SK-N-SH (cell line): ENCODE measurements at regions of chr20 and their contacts with region 1.

Region 1: DNA sequence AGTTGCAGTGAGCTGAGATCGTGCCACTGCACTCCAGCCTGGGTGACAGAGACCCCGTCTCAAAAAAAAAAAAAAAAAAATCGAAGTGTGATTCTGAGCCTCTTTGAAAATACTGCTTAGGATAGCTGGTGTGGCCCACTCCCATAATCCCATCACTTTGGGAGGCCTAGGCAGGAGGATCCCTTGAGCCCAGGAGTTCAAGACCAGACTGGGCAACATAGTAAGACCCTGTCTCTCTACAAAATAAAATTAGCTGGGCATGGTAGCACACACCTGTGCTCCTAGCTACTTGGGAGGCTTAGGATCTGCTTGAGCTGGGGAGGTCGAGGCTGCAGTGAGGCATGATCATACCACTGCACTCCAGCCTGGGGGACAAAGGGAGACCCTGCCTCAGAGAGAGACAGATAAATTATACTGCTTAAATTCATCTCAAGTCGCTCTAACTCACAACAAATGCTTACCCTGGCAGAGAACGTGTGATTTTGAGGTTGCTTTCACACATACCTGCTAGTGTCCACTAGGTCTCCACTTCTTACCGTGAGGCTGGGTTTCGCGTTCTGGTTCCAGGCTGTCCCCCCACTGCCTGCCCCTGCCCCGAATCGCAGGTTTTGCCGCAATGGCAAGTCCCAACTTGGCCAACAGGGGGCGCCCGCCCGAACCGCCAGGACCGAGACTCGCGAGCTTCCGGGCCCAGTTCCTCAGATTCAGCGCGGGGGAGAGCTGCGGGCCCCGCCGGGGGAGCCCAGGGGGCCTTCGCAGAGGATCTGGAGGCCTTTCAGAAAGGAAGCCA is 12.3 kb upstream of the TMC2 start:
- DNase-seq: peak; percentile 87
- H3K4me3 ChIP-seq: peak overlapping the region; percentile 55 to 91
- H3K27ac ChIP-seq: peak overlapping the region; percentile 62 to 73; a peak in 3 of 4 replicates
- H3K4me1 ChIP-seq: peaks cover 5% of the 10 kb centered on the region in 2 experiments; a peak in 1 of 4 replicates
- H3K27me3 ChIP-seq: no peaks in the 10 kb centered on the region
- CTCF ChIP-seq: peak; percentile 97
- EP300 ChIP-seq: no peak
- RAD21 ChIP-seq: peak; percentile 61

Region 2: GRCh38 chr20:2508631-2509467 is 15.3 kb before region 1 on chr20 and contains the start of gene ZNF343:
- CTCF ChIA-PET with region 1: interaction called, 55 read pairs
- POLR2A ChIA-PET with region 1: no interaction called
- DNase-seq: peak; percentile 86
- H3K4me3 ChIP-seq: peak within 1 kb of the TSS; percentile 76 to 84
- H3K27ac ChIP-seq: peak within 1 kb of the TSS; percentile 56 to 95
- H3K4me1 ChIP-seq: peaks cover 2 to 12% of the 10 kb centered on the region in 2 experiments; a peak in 2 of 4 replicates
- H3K27me3 ChIP-seq: no peaks in the 10 kb centered on the region
- CTCF ChIP-seq: no peak
- EP300 ChIP-seq: no peak; a peak in 1 of 4 replicates
- RAD21 ChIP-seq: no peak
- polyA plus RNA-seq, gene ZNF343: 11.0 and 16.8 TPM in 2 replicates

Region 3: DNA sequence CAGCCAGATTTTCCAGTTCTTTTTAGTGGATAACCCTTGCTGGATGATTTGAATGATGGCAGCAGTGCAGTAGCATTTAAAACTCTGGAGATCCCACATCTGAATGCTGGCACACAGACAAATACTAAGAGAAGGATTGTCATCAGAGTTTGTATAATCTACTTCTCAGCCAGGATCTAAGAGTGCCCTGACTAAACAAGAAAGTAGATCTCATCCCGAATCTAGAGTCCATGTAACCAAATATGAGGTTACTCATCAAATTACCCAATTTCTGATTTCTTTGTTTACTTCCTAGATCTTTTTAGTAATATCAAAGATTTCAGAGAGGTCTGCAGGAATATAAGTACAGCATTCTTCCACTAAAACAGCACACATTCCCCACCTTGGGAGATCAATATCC is 20.1 kb after region 1 on chr20:
- CTCF ChIA-PET with region 1: interaction called, 16 read pairs
- POLR2A ChIA-PET with region 1: interaction called, 3 read pairs
- DNase-seq: no peak
- H3K4me3 ChIP-seq: no peak overlapping the region
- H3K27ac ChIP-seq: no peak overlapping the region
- H3K4me1 ChIP-seq: no peaks in the 10 kb centered on the region
- H3K27me3 ChIP-seq: no peaks in the 10 kb centered on the region; the same call in 1 of the 2 replicates
- CTCF ChIP-seq: no peak
- EP300 ChIP-seq: no peak
- RAD21 ChIP-seq: no peak

Region 4: GRCh38 chr20:2637246-2637645 is 113.1 kb after region 1 on chr20:
- CTCF ChIA-PET with region 1: interaction called, 14 read pairs
- POLR2A ChIA-PET with region 1: no interaction called
- DNase-seq: no peak
- H3K4me3 ChIP-seq: no peak overlapping the region
- H3K27ac ChIP-seq: no peak overlapping the region
- H3K4me1 ChIP-seq: no peaks in the 10 kb centered on the region
- H3K27me3 ChIP-seq: no peaks in the 10 kb centered on the region; the same call in 1 of the 2 replicates
- CTCF ChIP-seq: no peak
- EP300 ChIP-seq: no peak
- RAD21 ChIP-seq: no peak

Region 5: DNA sequence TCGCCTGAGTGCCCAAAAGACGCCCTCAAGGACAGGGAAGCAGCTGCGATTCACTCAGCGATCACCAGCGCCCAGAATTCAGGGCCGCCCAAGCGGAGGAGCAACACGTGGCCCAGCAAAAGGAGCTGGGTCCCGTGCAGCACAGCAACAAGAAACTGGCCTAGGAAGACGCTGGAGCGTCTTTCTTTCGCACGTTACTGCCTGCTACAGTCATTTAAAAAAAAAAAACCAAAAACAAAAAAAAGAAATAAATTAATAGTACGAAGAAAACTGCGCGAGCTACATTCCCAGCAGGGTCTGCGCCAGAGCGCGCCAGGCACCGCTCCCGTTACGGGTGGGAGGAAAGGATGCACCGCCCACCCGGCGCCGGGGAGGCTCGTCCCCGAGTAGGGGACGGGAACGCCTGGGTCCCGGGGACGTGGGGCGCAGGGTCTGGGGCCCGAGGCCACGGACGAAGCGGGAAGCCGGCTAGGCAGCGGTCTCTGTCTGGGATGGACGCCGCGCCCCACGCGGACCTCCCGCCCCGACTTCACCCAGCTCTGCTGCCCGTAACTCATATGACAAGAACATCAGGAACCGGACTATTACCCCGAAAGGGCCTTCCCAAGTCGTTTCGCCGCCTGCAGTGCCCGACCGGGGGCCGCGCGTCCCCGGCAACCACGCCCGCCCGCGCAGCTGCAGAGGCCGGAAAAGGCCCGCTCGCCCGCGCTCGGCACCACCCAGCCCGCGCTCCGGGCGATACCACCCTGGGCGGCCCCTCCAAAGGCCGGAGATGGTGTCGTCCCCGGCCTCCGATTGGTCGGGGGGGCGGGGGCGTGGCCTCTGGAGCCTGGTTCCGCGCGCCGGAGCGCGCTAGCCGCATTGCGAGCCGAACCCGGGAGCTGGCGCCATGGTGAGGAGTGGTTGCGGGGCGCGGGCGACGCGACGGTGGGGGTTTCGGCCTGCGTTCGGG is 127.9 kb after region 1 on chr20 and contains the start of gene NOP56:
- CTCF ChIA-PET with region 1: interaction called, 133 read pairs
- POLR2A ChIA-PET with region 1: interaction called, 12 read pairs
- DNase-seq: peak; percentile 98
- H3K4me3 ChIP-seq: peak within 1 kb of the TSS; percentile 72 to 94
- H3K27ac ChIP-seq: peak within 1 kb of the TSS; percentile 87 to 95
- H3K4me1 ChIP-seq: peaks cover 6 to 18% of the 10 kb centered on the region in 2 experiments; a peak in 3 of 4 replicates
- H3K27me3 ChIP-seq: no peaks in the 10 kb centered on the region
- CTCF ChIP-seq: no peak
- EP300 ChIP-seq: peak in 1 of 2 experiments; percentile 31; a peak in 1 of 4 replicates
- RAD21 ChIP-seq: no peak
- polyA plus RNA-seq, gene NOP56: 158 and 218 TPM in 2 replicates

Region 6: DNA sequence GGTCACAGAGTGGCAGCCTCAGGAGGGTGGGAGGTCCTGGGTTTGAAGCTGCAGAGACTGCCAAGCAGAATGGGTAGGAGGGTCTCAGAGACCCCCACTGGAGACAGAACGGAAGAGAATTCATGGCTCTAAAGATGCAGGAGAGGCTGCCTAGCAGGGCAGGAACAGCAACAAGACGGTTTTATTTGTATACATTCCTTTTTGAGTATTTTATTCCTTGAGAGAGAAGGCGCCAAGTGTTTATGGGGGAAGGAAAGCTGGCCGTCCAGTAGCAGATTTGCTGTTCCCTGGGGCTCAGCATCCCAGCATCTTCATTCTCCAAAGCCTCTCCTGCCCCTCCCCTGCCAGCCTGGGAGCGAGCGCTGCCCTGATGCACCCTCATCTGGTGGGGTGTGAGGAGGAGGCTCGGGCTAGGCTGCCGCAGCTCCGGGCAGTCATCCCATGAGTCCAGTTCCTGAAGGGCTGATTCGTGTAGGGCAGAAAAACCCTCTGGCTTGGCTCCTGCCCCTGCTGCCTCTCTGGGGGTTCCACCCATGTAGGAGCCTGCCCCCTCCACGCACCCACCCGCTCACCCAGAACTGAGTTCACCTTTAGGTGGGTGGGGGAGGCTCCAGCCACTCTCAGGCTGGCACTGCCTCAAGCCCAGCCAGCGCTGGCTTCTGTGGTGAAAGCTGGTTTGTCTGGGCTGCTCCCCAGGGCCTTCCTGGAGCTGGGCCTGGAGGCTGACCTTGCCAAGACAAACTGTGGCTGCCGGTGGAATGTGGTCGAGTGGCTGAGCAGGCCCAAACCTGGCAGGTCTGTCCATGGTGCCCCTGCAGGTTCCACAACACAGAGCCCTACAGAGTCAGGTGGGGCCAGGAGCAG is 243.9 kb after region 1 on chr20:
- CTCF ChIA-PET with region 1: no interaction called
- POLR2A ChIA-PET with region 1: no interaction called
- DNase-seq: peak; percentile 14
- H3K4me3 ChIP-seq: no peak overlapping the region
- H3K27ac ChIP-seq: no peak overlapping the region
- H3K4me1 ChIP-seq: 0 out of 4 replicates have a peak, but pooled peaks cover 0 to 5% of the 10 kb centered on the region in 2 experiments
- H3K27me3 ChIP-seq: no peaks in the 10 kb centered on the region
- CTCF ChIP-seq: no peak
- EP300 ChIP-seq: no peak
- RAD21 ChIP-seq: no peak

Region 7: DNA sequence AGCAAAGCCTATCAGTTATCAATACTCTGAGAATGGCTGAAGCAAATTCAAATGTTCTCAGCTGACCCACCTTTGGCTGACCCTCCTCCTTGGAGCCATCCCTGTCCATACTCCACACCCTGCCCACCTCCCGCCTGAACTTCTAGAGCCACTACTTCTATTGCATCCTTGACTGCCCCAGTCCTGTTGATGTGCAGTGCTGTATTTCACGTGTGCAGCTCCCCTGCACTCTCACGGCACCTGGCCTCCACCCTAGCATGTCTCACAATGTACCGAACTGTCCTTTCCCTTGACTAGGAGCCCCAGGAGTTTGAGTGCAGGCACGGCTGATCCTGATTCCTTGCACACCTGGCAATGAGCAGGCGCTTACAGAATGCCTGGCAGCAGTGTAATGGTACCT is 269.4 kb after region 1 on chr20:
- CTCF ChIA-PET with region 1: no interaction called
- POLR2A ChIA-PET with region 1: no interaction called
- DNase-seq: no peak
- H3K4me3 ChIP-seq: no peak overlapping the region
- H3K27ac ChIP-seq: no peak overlapping the region
- H3K4me1 ChIP-seq: no peaks in the 10 kb centered on the region
- H3K27me3 ChIP-seq: no peaks in the 10 kb centered on the region; the same call in 1 of the 2 replicates
- CTCF ChIP-seq: no peak
- EP300 ChIP-seq: no peak
- RAD21 ChIP-seq: no peak